Activated B cell treated with CpG ODN at 0.5 μM for 24 hours (primary cell): ENCODE measurements at regions of chr12 and their contacts with region 1.

Region 1: GRCh38 chr12:31783996-31784645 is 55.3 kb upstream of the AMN1 start:
- DNase-seq: no peak
- ATAC-seq: no peak
- H3K4me3 Mint-ChIP-seq: no peak overlapping the region
- H3K27ac Mint-ChIP-seq: no peak overlapping the region
- H3K4me1 Mint-ChIP-seq: peaks cover 14% of the 10 kb centered on the region
- H3K27me3 Mint-ChIP-seq: no peaks in the 10 kb centered on the region
- CTCF ChIP-seq: no peak

Region 2: GRCh38 chr12:31756977-31757420 is 27.1 kb before region 1 on chr12:
- CTCF ChIA-PET with region 1: no interaction called
- POLR2A ChIA-PET with region 1: no interaction called
- intact Hi-C with region 1: loop called (anchors 2 kb)
- DNase-seq: no peak
- ATAC-seq: no peak
- H3K4me3 Mint-ChIP-seq: no peak overlapping the region
- H3K27ac Mint-ChIP-seq: peak overlapping the region; percentile 53
- H3K4me1 Mint-ChIP-seq: peaks cover 33% of the 10 kb centered on the region
- H3K27me3 Mint-ChIP-seq: no peaks in the 10 kb centered on the region
- CTCF ChIP-seq: no peak

Region 3: DNA sequence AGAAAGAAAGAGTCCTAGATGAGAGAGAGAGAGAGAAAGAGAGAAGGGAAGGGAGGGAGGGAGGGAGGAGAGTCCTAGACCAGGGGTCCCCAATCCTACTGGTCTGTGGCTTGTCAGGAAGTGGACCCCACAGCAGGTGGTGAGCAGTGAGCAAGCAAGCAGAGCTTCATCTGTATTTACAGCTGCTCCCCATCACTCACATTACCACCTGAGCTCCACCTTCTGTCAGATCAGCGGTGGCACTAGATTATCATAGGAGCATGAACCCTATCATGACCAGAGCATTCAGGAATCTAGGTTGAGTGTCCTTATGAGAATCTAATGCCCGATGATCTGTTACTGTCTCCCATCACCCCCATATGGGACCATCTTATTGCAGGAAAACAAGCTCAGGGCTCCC is 16.1 kb before region 1 on chr12:
- CTCF ChIA-PET with region 1: no interaction called
- POLR2A ChIA-PET with region 1: interaction called, 6 read pairs
- intact Hi-C with region 1: loop called (anchors 2 kb)
- DNase-seq: no peak
- ATAC-seq: no peak
- H3K4me3 Mint-ChIP-seq: no peak overlapping the region
- H3K27ac Mint-ChIP-seq: peak overlapping the region; percentile 35
- H3K4me1 Mint-ChIP-seq: peaks cover 30% of the 10 kb centered on the region
- H3K27me3 Mint-ChIP-seq: no peaks in the 10 kb centered on the region
- CTCF ChIP-seq: no peak

Region 4: GRCh38 chr12:31832740-31833729 is 48.9 kb after region 1 on chr12:
- CTCF ChIA-PET with region 1: no interaction called
- POLR2A ChIA-PET with region 1: no interaction called
- intact Hi-C with region 1: no loop called
- DNase-seq: peak; percentile 36
- ATAC-seq: peak; percentile 84
- H3K4me3 Mint-ChIP-seq: peak overlapping the region; percentile 59
- H3K27ac Mint-ChIP-seq: peak overlapping the region; percentile 94
- H3K4me1 Mint-ChIP-seq: peaks cover 76% of the 10 kb centered on the region
- H3K27me3 Mint-ChIP-seq: no peaks in the 10 kb centered on the region
- CTCF ChIP-seq: no peak

Region 5: GRCh38 chr12:31868965-31869364 is 84.8 kb after region 1 on chr12:
- CTCF ChIA-PET with region 1: no interaction called
- POLR2A ChIA-PET with region 1: no interaction called
- intact Hi-C with region 1: no loop called
- DNase-seq: no peak
- ATAC-seq: no peak
- H3K4me3 Mint-ChIP-seq: no peak overlapping the region
- H3K27ac Mint-ChIP-seq: peak overlapping the region; percentile 75
- H3K4me1 Mint-ChIP-seq: peaks cover 58% of the 10 kb centered on the region
- H3K27me3 Mint-ChIP-seq: no peaks in the 10 kb centered on the region
- CTCF ChIP-seq: no peak